ENCODE measurements at regions of chr2 and their contacts with region 1.

Region 1: DNA sequence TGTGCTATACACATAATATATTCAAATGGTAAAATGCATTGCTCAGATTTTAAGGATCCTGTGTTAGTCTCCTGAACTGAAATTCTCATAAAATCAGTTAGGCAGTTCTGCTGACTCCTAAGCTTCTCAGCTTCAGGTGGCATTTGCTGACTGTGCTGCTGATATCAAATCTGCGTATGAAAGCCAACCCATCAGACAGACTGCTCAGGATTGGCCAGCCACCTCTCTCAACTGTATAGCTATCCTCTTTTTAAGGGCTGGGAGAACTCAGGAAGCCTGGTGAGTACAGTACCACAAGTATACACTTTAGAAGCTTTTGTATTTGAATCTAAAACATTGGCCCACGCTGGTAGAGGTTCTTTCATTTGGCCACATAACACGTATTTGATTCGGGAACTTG is 28.7 kb downstream of the PTCD3 start:
- DNase-seq: no peak
- H3K4me3 ChIP-seq: no peak overlapping the region
- H3K27ac ChIP-seq: no peak overlapping the region
- H3K4me1 ChIP-seq: no peaks in the 10 kb centered on the region
- H3K27me3 ChIP-seq: no peaks in the 10 kb centered on the region
- CTCF ChIP-seq: no peak
- EP300 ChIP-seq: no peak
- POLR2A ChIP-seq: no peak

Region 2: DNA sequence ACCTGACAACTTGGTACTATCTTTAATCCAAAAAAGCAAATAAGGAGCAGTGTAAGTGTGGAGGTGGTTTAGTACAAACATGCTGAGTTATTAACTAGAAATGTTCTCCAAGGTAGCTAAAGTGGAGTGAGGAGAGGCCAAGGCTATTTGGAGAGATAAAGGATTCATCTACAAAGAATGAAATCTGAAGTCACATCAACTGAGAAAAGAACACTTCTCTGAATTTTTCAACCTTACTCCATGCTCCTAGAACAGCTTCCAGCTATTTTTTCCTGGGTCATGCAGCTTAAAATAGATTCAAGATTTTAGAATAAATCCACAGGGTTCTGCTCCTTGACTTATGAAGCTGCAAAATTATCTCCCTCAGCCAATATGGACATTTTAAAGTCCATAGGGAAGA is 41.9 kb after region 1 on chr2:
- intact Hi-C with region 1: loop called (anchors 5 kb)
- DNase-seq: no peak
- H3K4me3 ChIP-seq: no peak overlapping the region
- H3K27ac ChIP-seq: no peak overlapping the region
- H3K4me1 ChIP-seq: no peaks in the 10 kb centered on the region
- H3K27me3 ChIP-seq: no peaks in the 10 kb centered on the region
- CTCF ChIP-seq: no peak
- EP300 ChIP-seq: no peak
- POLR2A ChIP-seq: no peak

Region 3: DNA sequence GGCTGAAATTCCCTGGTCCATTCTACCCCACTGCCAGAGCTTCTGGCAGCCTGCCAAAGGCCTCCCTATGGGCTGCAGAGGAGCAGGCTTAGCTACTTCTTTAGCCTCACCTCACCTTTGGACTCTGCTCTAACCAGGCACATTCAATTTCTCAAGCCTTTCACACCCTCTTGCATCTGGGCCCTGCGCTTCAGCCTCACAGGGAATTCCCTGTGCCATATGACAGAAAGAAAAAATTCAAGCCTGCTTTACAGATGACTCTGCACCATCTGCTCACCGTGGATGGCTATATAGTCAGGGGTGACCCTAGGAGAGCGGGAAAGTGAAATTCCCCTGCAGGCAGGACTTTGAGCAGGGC is 140.2 kb after region 1 on chr2:
- intact Hi-C with region 1: no loop called
- DNase-seq: peak; percentile 79
- H3K4me3 ChIP-seq: no peak overlapping the region
- H3K27ac ChIP-seq: peak overlapping the region; percentile 23 to 67 (median 51)
- H3K4me1 ChIP-seq: peaks cover 0 to 26% (median 21%) of the 10 kb centered on the region in 4 donors
- H3K27me3 ChIP-seq: no peaks in the 10 kb centered on the region
- CTCF ChIP-seq: no peak
- EP300 ChIP-seq: no peak
- POLR2A ChIP-seq: no peak

Region 4: GRCh38 chr2:86305195-86305914 is 170.6 kb after region 1 on chr2:
- intact Hi-C with region 1: no loop called
- DNase-seq: peak; percentile 74
- H3K4me3 ChIP-seq: no peak overlapping the region
- H3K27ac ChIP-seq: peak overlapping the region in 3 of 4 donors; percentile 37 to 82 (median 37)
- H3K4me1 ChIP-seq: peaks cover 0 to 86% (median 72%) of the 10 kb centered on the region in 4 donors
- H3K27me3 ChIP-seq: no peaks in the 10 kb centered on the region
- CTCF ChIP-seq: no peak
- EP300 ChIP-seq: no peak
- POLR2A ChIP-seq: no peak